ENCODE measurements at regions of chr6 and their contacts with region 1.

Region 1: GRCh38 chr6:29752451-29753308 is 29.4 kb downstream of the HLA-F start:
- DNase-seq: peak; percentile 96
- H3K4me3 ChIP-seq: peak overlapping the region; percentile 62 to 74 (median 71)
- H3K27ac ChIP-seq: peak overlapping the region; percentile 89 to 97 (median 94)
- H3K4me1 ChIP-seq: peaks cover 0 to 30% (median 24%) of the 10 kb centered on the region in 4 donors
- H3K27me3 ChIP-seq: peaks cover 0 to 16% (median 10%) of the 10 kb centered on the region in 3 donors
- CTCF ChIP-seq: peak; percentile 93 to 98 (median 96)
- EP300 ChIP-seq: no peak
- POLR2A ChIP-seq: peak in 1 of 2 donors; percentile 15

Region 2: GRCh38 chr6:29632789-29633533 is 119.7 kb before region 1 on chr6 and contains the start of gene GABBR1:
- intact Hi-C with region 1: loop called (anchors 5 kb)
- DNase-seq: peak; percentile 96
- H3K4me3 ChIP-seq: peak within 1 kb of the TSS; percentile 76 to 89 (median 79)
- H3K27ac ChIP-seq: peak within 1 kb of the TSS; percentile 88 to 90 (median 89)
- H3K4me1 ChIP-seq: peaks cover 0 to 36% (median 31%) of the 10 kb centered on the region in 4 donors
- H3K27me3 ChIP-seq: no peaks in the 10 kb centered on the region
- CTCF ChIP-seq: no peak
- EP300 ChIP-seq: no peak
- POLR2A ChIP-seq: peak; percentile 4 to 74
- total RNA-seq, gene GABBR1: 26.5 to 73.9 (median 46.0) TPM

Region 3: GRCh38 chr6:29649701-29650673 is 102.7 kb before region 1 on chr6:
- intact Hi-C with region 1: loop called (anchors 5 kb)
- DNase-seq: peak; percentile 99
- H3K4me3 ChIP-seq: peak overlapping the region; percentile 39 to 60 (median 58)
- H3K27ac ChIP-seq: peak overlapping the region; percentile 90 to 94 (median 92)
- H3K4me1 ChIP-seq: peaks cover 0 to 9% (median 4%) of the 10 kb centered on the region in 4 donors
- H3K27me3 ChIP-seq: no peaks in the 10 kb centered on the region
- CTCF ChIP-seq: peak; percentile 83 to 95 (median 88)
- EP300 ChIP-seq: peak in 2 of 4 donors; percentile 11 to 22
- POLR2A ChIP-seq: peak; percentile 37 to 59

Region 4: DNA sequence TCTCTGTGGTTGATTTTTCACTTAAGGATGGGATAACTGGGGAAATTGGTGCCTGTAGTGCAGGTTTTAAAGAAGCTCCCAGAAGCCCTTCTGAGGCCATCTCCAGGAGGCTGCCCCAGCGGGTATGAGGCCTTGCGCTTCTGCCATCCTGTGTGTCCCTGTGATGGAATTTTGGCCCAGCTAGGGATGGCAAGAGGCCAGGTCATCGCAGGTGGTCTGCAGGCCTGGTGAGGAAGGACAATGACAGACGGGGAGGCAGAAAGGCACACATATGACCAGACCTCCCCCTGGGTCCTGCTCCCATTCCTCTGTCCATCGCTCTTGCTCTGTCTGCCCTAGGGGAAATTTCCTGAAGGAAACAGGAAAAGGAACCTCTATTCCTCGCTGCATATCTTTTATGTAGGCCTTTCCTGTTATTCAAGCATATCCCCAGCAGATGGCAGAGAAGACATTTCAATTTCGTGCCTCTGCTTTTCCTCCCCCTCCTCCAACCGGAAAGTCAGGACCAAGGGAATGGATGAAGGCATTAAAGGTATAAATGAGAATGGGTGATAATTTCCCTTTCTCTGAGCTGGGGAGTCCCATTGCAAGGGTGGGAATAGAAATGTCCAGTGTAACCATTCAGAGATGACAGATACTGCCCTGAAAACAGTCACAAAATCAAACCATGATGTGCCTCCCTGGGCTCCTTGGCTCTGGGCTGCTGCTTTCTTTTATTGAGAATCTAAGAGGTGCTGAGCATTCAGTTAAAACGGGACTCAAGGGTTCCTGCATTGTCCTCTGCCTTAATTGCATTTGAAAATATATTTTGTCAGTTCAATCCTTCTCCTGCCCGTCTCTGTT is 47.1 kb before region 1 on chr6:
- intact Hi-C with region 1: loop called (anchors 2 kb)
- DNase-seq: no peak
- H3K4me3 ChIP-seq: no peak overlapping the region
- H3K27ac ChIP-seq: no peak overlapping the region
- H3K4me1 ChIP-seq: no peaks in the 10 kb centered on the region
- H3K27me3 ChIP-seq: peaks cover 0 to 24% (median 0%) of the 10 kb centered on the region in 3 donors
- CTCF ChIP-seq: peak; percentile 36 to 63 (median 48)
- EP300 ChIP-seq: no peak
- POLR2A ChIP-seq: no peak

Region 5: DNA sequence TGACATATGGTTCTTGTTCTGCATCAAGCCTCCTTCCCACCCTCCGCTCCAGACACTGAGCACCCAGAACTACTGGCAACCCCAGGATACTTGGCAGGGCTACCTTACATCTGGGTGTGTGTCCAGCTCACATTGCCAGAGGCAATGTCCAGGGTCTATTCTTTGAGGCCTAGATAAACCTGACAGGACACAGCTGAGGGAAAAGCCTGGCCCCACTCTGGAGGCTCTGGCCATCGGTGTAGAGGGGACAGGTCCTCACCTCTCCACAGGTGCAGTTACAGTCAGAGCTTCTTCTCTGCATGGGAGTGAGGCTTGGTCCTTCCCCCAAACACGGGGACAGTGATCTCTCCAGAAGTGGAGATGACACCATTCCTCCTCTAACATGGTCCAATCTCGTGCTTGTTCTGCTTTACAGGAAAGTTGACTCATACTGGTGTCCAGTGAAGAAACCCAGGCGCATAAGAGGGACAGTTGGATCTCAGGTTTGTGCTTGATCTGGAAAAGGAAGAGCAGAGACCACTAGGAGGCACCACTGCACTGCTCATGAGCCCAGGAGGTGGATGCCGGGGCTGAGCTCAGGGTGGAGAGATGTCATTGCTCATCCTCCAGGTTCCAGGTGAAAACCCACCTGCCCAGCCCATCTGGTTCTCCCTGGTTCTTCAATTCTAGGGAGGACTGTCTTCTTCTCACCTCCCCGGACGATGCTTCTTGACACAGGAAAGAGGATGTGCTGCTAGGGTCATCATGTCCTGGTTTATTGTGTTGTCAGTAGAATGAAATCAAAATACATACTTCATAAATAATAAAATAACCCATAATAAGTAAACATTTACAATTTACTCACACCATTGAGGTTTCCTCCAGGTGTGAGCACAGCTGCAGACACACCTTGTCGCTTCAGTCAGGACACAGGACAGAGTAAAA is 14.7 kb before region 1 on chr6:
- intact Hi-C with region 1: loop called (anchors 1 kb)
- DNase-seq: peak; percentile 84
- H3K4me3 ChIP-seq: no peak overlapping the region
- H3K27ac ChIP-seq: no peak overlapping the region
- H3K4me1 ChIP-seq: no peaks in the 10 kb centered on the region
- H3K27me3 ChIP-seq: no peaks in the 10 kb centered on the region
- CTCF ChIP-seq: peak; percentile 60 to 76 (median 62)
- EP300 ChIP-seq: no peak
- POLR2A ChIP-seq: no peak

Region 6: GRCh38 chr6:29813809-29814208 is 61.1 kb after region 1 on chr6:
- intact Hi-C with region 1: no loop called
- DNase-seq: no peak
- H3K4me3 ChIP-seq: no peak overlapping the region
- H3K27ac ChIP-seq: no peak overlapping the region
- H3K4me1 ChIP-seq: no peaks in the 10 kb centered on the region
- H3K27me3 ChIP-seq: no peaks in the 10 kb centered on the region
- CTCF ChIP-seq: no peak
- EP300 ChIP-seq: no peak
- POLR2A ChIP-seq: no peak

Region 7: GRCh38 chr6:29834564-29835436 is 82.1 kb after region 1 on chr6:
- intact Hi-C with region 1: loop called (anchors 5 kb)
- DNase-seq: no peak
- H3K4me3 ChIP-seq: no peak overlapping the region
- H3K27ac ChIP-seq: no peak overlapping the region
- H3K4me1 ChIP-seq: no peaks in the 10 kb centered on the region
- H3K27me3 ChIP-seq: peaks cover 0 to 51% (median 6%) of the 10 kb centered on the region in 3 donors
- CTCF ChIP-seq: peak in 3 of 4 experiments; percentile 48 to 79 (median 63)
- EP300 ChIP-seq: no peak
- POLR2A ChIP-seq: no peak

Region 8: GRCh38 chr6:30066577-30067459 is 314.1 kb after region 1 on chr6 and contains the start of gene PPP1R11:
- intact Hi-C with region 1: loop called (anchors 5 kb)
- DNase-seq: peak; percentile 100
- H3K4me3 ChIP-seq: peak within 1 kb of the TSS; percentile 52 to 80 (median 62)
- H3K27ac ChIP-seq: peak within 1 kb of the TSS; percentile 81 to 93 (median 88)
- H3K4me1 ChIP-seq: peaks cover 0 to 42% (median 37%) of the 10 kb centered on the region in 4 donors
- H3K27me3 ChIP-seq: peaks cover 5 to 27% (median 16%) of the 10 kb centered on the region in 3 donors
- CTCF ChIP-seq: no peak
- EP300 ChIP-seq: peak in 1 of 4 donors; percentile 91
- POLR2A ChIP-seq: peak; percentile 86 to 93
- total RNA-seq, gene PPP1R11: 36.8 to 45.7 (median 42.2) TPM

Measured in sigmoid colon (tissue), 7 donors.